CD4-positive, alpha-beta memory T cell (primary cell): ENCODE measurements at regions of chr5 and their contacts with region 1.

Region 1: GRCh38 chr5:75681125-75681830 is 36.0 kb downstream of the POC5 start:
- DNase-seq: peak in 4 of 5 donors; percentile 26 to 39 (median 34)
- H3K4me3 ChIP-seq: no peak overlapping the region
- H3K4me3 Mint-ChIP-seq: no peak overlapping the region
- H3K27ac ChIP-seq: no peak overlapping the region
- H3K27ac Mint-ChIP-seq: peak overlapping the region in 1 of 7 donors; percentile 29
- H3K4me1 ChIP-seq: peaks cover 5% of the 10 kb centered on the region
- H3K4me1 Mint-ChIP-seq: peaks cover 5 to 11% (median 9%) of the 10 kb centered on the region in 4 donors
- H3K27me3 ChIP-seq: no peaks in the 10 kb centered on the region
- H3K27me3 Mint-ChIP-seq: no peaks in the 10 kb centered on the region

Region 2: GRCh38 chr5:74673011-74673790 is 1008.1 kb before region 1 on chr5:
- CTCF ChIA-PET with region 1: no interaction called
- POLR2A ChIA-PET with region 1: no interaction called
- intact Hi-C with region 1: loop called (anchors 5 kb)
- DNase-seq: peak in 2 of 5 donors; percentile 18 to 26
- H3K4me3 ChIP-seq: no peak overlapping the region
- H3K4me3 Mint-ChIP-seq: no peak overlapping the region
- H3K27ac ChIP-seq: no peak overlapping the region
- H3K27ac Mint-ChIP-seq: peak overlapping the region in 1 of 7 donors; percentile 22
- H3K4me1 ChIP-seq: no peaks in the 10 kb centered on the region
- H3K4me1 Mint-ChIP-seq: no peaks in the 10 kb centered on the region
- H3K27me3 ChIP-seq: no peaks in the 10 kb centered on the region
- H3K27me3 Mint-ChIP-seq: peaks cover 7 to 14% of the 10 kb centered on the region in 2 donors

Region 3: DNA sequence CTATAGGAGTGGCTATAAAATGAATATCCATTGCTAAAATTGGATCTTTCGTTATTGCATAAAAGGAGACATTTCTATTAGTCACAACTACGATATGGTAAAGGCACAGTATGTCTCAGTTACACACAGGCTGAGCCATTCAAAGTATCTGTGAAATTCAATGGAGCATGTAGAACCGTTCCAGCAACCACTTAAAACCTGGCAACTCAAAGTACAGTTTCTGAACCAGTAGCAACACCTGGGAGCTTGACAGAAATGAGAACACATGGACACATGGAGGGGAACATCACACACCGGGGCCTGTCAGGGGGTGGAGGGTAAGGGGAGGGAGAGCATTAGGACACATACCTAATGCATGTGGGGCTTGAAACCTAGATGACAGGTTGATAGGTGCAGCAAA is 20.6 kb after region 1 on chr5:
- CTCF ChIA-PET with region 1: no interaction called
- POLR2A ChIA-PET with region 1: no interaction called
- intact Hi-C with region 1: no loop called
- DNase-seq: no peak
- H3K4me3 ChIP-seq: no peak overlapping the region
- H3K4me3 Mint-ChIP-seq: no peak overlapping the region
- H3K27ac ChIP-seq: no peak overlapping the region
- H3K27ac Mint-ChIP-seq: peak overlapping the region in 1 of 7 donors; percentile 36
- H3K4me1 ChIP-seq: no peaks in the 10 kb centered on the region
- H3K4me1 Mint-ChIP-seq: peaks cover 4 to 14% (median 11%) of the 10 kb centered on the region in 4 donors
- H3K27me3 ChIP-seq: no peaks in the 10 kb centered on the region
- H3K27me3 Mint-ChIP-seq: no peaks in the 10 kb centered on the region

Region 4: GRCh38 chr5:75717082-75717922 is 36.0 kb after region 1 on chr5 and contains the start of gene POC5:
- CTCF ChIA-PET with region 1: no interaction called
- POLR2A ChIA-PET with region 1: interaction called, 5 read pairs
- intact Hi-C with region 1: loop called (anchors 5 kb)
- DNase-seq: peak; percentile 98 to 99 (median 98)
- H3K4me3 ChIP-seq: peak within 1 kb of the TSS; percentile 74 to 95
- H3K4me3 Mint-ChIP-seq: peak within 1 kb of the TSS; percentile 99 to 100 (median 100)
- H3K27ac ChIP-seq: peak within 1 kb of the TSS; percentile 74
- H3K27ac Mint-ChIP-seq: peak within 1 kb of the TSS; percentile 98 to 100 (median 99)
- H3K4me1 ChIP-seq: peaks cover 18% of the 10 kb centered on the region
- H3K4me1 Mint-ChIP-seq: peaks cover 29 to 43% (median 36%) of the 10 kb centered on the region in 4 donors
- H3K27me3 ChIP-seq: no peaks in the 10 kb centered on the region
- H3K27me3 Mint-ChIP-seq: no peaks in the 10 kb centered on the region
- total RNA-seq, gene POC5: 15.1 to 20.0 TPM